MCF 10A (cell line): ENCODE measurements at regions of chr17 and their contacts with region 1.

Region 1: DNA sequence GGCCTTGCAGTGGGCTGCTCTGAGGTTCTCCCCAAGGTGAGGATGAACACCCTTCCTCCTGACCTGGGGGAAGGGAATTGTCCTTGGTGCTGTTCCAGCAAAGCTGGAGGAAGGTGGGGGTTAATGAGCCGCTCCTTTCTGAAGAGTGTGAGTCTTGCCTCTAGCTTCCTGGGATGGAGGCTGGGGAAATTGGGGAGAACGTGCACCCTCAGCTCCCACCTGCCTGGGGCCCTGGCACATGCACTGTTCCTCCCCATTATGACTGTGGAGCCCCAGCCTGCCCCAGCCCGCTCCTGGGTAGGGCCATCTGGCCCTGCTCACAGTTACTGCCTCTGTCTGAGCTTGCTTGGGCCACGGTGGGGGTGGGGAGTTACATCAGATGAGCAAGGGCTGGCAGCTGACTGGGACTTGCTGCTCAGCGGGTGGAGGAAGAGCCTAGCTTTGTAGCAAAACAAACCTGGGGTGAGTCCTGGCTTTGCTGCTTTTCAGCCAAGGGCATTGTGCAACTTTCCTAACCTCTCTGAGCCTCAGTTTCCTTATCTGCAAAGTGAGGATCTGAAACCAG is 11.1 kb downstream of the TNS4 start:
- DNase-seq: peak; percentile 93
- H3K4me3 Mint-ChIP-seq: peak overlapping the region; percentile 98
- H3K27ac Mint-ChIP-seq: peak overlapping the region; percentile 83
- H3K4me1 Mint-ChIP-seq: peaks cover 70% of the 10 kb centered on the region
- H3K27me3 Mint-ChIP-seq: no peaks in the 10 kb centered on the region
- CTCF ChIP-seq: no peak

Region 2: GRCh38 chr17:40251576-40251975 is 238.8 kb before region 1 on chr17:
- CTCF ChIA-PET with region 1: no interaction called
- POLR2A ChIA-PET with region 1: no interaction called
- intact Hi-C with region 1: no loop called
- DNase-seq: peak; percentile 86
- H3K4me3 Mint-ChIP-seq: no peak overlapping the region
- H3K27ac Mint-ChIP-seq: peak overlapping the region; percentile 39
- H3K4me1 Mint-ChIP-seq: peaks cover 9% of the 10 kb centered on the region
- H3K27me3 Mint-ChIP-seq: no peaks in the 10 kb centered on the region
- CTCF ChIP-seq: no peak

Region 3: DNA sequence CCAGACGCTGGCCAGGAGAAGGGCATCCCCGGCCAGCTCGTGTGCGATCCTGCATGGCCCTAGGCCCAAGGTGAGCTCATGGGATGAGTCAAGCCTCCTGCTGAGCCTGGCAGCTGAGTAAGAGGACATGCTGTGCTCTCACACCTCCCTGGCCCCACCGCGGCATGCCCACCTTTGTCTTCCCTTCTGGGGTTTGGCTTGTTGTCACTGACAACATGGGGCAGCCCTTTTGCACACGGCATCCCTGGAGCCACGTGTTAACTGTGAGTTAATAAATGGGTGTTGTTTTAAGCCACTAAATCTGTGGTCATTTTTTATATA is 19.9 kb after region 1 on chr17:
- CTCF ChIA-PET with region 1: interaction called, 3 read pairs
- POLR2A ChIA-PET with region 1: interaction called, 336 read pairs
- intact Hi-C with region 1: loop called (anchors 1 kb)
- DNase-seq: peak; percentile 99
- H3K4me3 Mint-ChIP-seq: peak overlapping the region; percentile 48
- H3K27ac Mint-ChIP-seq: peak overlapping the region; percentile 95
- H3K4me1 Mint-ChIP-seq: peaks cover 56% of the 10 kb centered on the region
- H3K27me3 Mint-ChIP-seq: no peaks in the 10 kb centered on the region
- CTCF ChIP-seq: no peak

Region 4: DNA sequence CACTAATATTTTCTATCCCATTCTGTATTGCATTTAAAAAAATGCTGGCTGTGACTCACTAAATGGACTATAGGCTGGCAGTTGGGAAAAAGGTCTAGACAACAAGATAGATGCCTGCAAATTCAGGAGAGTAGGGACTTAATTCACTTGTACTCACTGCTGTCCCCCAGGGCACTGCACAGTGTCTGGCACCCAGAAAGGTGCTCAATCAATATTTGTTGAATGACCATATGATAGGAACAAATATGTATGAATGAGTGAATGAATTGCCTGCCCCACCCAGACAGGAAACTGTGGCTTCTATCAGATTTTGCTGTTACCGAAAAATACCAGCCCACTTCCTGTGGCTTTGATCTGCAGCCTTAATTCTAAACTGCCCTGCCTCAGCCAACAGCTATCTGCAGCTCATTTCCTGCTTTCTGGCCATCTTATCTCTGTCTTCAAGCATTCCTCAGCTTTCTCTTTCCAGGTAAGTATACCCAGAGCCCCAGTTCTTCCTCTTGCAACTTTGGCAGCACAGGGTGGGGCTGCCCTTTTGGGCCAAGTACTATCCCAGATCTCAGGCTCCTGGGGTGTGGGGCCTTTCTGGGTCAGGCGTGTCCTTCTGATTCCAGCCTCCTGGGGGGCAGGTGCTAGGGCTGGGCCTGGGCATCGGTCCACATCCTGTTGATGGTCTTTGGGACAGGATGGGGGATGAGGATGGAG is 26.4 kb after region 1 on chr17:
- CTCF ChIA-PET with region 1: interaction called, 4 read pairs
- POLR2A ChIA-PET with region 1: interaction called, 614 read pairs
- intact Hi-C with region 1: no loop called
- DNase-seq: no peak
- H3K4me3 Mint-ChIP-seq: peak overlapping the region; percentile 58
- H3K27ac Mint-ChIP-seq: peak overlapping the region; percentile 87
- H3K4me1 Mint-ChIP-seq: peaks cover 63% of the 10 kb centered on the region
- H3K27me3 Mint-ChIP-seq: no peaks in the 10 kb centered on the region
- CTCF ChIP-seq: no peak

Region 5: GRCh38 chr17:40542558-40543411 is 52.4 kb after region 1 on chr17:
- CTCF ChIA-PET with region 1: no interaction called
- POLR2A ChIA-PET with region 1: interaction called, 472 read pairs
- intact Hi-C with region 1: no loop called
- DNase-seq: peak; percentile 96
- H3K4me3 Mint-ChIP-seq: no peak overlapping the region
- H3K27ac Mint-ChIP-seq: peak overlapping the region; percentile 96
- H3K4me1 Mint-ChIP-seq: peaks cover 21% of the 10 kb centered on the region
- H3K27me3 Mint-ChIP-seq: no peaks in the 10 kb centered on the region
- CTCF ChIP-seq: no peak

Region 6: GRCh38 chr17:40551879-40552768 is 61.8 kb after region 1 on chr17:
- CTCF ChIA-PET with region 1: interaction called, 3 read pairs
- POLR2A ChIA-PET with region 1: interaction called, 17 read pairs
- intact Hi-C with region 1: no loop called
- DNase-seq: peak; percentile 65
- H3K4me3 Mint-ChIP-seq: no peak overlapping the region
- H3K27ac Mint-ChIP-seq: no peak overlapping the region
- H3K4me1 Mint-ChIP-seq: peaks cover 32% of the 10 kb centered on the region
- H3K27me3 Mint-ChIP-seq: no peaks in the 10 kb centered on the region
- CTCF ChIP-seq: no peak

Region 7: GRCh38 chr17:40647624-40648383 is 157.4 kb after region 1 on chr17 and contains the start of gene SMARCE1:
- CTCF ChIA-PET with region 1: no interaction called
- POLR2A ChIA-PET with region 1: no interaction called
- intact Hi-C with region 1: no loop called
- DNase-seq: peak; percentile 68
- H3K4me3 Mint-ChIP-seq: peak within 1 kb of the TSS; percentile 85
- H3K27ac Mint-ChIP-seq: peak within 1 kb of the TSS; percentile 100
- H3K4me1 Mint-ChIP-seq: peaks cover 27% of the 10 kb centered on the region
- H3K27me3 Mint-ChIP-seq: no peaks in the 10 kb centered on the region
- CTCF ChIP-seq: no peak
- total RNA-seq, gene SMARCE1: 120 and 128 TPM in 2 replicates